WTC11 (cell line): ENCODE measurements at regions of chr12 and their contacts with region 1.

Region 1: GRCh38 chr12:52213512-52214420 is 19.3 kb upstream of the KRT7 start:
- DNase-seq: peak; percentile 96
- ATAC-seq: peak; percentile 86
- H3K4me3 Mint-ChIP-seq: no peak overlapping the region
- H3K27ac Mint-ChIP-seq: no peak overlapping the region
- H3K4me1 Mint-ChIP-seq: peaks cover 12% of the 10 kb centered on the region
- H3K27me3 Mint-ChIP-seq: no peaks in the 10 kb centered on the region
- CTCF ChIP-seq: peak; percentile 81

Region 2: GRCh38 chr12:51403681-51404136 is 810.1 kb before region 1 on chr12:
- CTCF ChIA-PET with region 1: no interaction called
- POLR2A ChIA-PET with region 1: no interaction called
- DNase-seq: no peak
- ATAC-seq: no peak
- H3K4me3 Mint-ChIP-seq: no peak overlapping the region
- H3K27ac Mint-ChIP-seq: peak overlapping the region; percentile 43; the same call in 1 of the 2 replicates
- H3K4me1 Mint-ChIP-seq: peaks cover 9% of the 10 kb centered on the region
- H3K27me3 Mint-ChIP-seq: no peaks in the 10 kb centered on the region
- CTCF ChIP-seq: no peak

Region 3: DNA sequence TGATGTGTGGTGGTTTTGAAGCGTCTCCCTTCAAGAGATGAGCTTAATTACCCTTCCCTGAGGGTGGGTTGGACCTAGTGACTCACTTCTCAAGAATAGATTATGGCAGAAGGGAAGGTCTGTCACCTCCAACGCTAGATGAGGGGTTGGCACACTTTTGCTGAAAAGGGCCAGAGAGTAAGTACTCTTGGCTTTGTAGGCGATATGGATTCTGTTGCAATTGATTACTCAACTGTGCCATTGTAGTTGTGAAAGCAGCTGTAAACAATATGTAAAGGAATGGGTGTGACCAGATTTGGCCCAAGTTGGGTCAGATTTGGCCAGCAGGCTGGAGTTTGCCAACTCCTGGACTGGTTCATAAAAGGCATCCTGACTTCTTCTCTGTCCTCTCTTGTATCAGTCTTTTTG is 81.0 kb before region 1 on chr12:
- CTCF ChIA-PET with region 1: no interaction called
- POLR2A ChIA-PET with region 1: no interaction called
- DNase-seq: no peak
- ATAC-seq: no peak
- H3K4me3 Mint-ChIP-seq: no peak overlapping the region
- H3K27ac Mint-ChIP-seq: no peak overlapping the region
- H3K4me1 Mint-ChIP-seq: peaks cover 20% of the 10 kb centered on the region
- H3K27me3 Mint-ChIP-seq: no peaks in the 10 kb centered on the region; the same call in none of the 2 replicates
- CTCF ChIP-seq: no peak

Region 4: GRCh38 chr12:52171950-52172512 is 41.7 kb before region 1 on chr12:
- CTCF ChIA-PET with region 1: interaction called, 53 read pairs
- POLR2A ChIA-PET with region 1: no interaction called
- DNase-seq: peak; percentile 79
- ATAC-seq: peak; percentile 71
- H3K4me3 Mint-ChIP-seq: no peak overlapping the region
- H3K27ac Mint-ChIP-seq: no peak overlapping the region
- H3K4me1 Mint-ChIP-seq: peaks cover 9% of the 10 kb centered on the region
- H3K27me3 Mint-ChIP-seq: no peaks in the 10 kb centered on the region
- CTCF ChIP-seq: 0 out of 2 replicates have a peak, but pooled peaks have one; percentile 25

Region 5: DNA sequence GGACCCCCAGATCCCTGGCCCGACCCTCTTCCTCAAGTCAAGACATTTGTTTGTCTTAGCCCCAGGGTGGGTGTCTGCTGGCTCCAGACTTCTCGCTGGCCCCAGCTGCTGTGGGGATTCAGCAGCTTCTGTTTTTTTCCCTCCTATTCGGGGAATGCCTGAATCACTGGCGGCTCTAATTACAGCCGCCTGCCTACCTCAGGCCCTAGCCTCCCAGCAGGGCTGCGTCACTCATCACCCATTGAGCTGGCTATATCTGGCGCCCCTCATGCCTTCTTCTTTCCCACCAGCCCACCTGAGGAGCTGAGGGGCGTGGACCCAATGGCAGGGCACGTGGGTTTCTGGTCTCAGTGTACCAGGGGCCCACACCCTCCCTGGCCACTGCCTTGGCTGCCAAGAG is 32.0 kb before region 1 on chr12:
- CTCF ChIA-PET with region 1: interaction called, 53 read pairs
- POLR2A ChIA-PET with region 1: no interaction called
- DNase-seq: peak; percentile 36
- ATAC-seq: peak; percentile 68
- H3K4me3 Mint-ChIP-seq: no peak overlapping the region
- H3K27ac Mint-ChIP-seq: peak overlapping the region; percentile 69; the same call in 1 of the 2 replicates
- H3K4me1 Mint-ChIP-seq: peaks cover 32% of the 10 kb centered on the region
- H3K27me3 Mint-ChIP-seq: no peaks in the 10 kb centered on the region; the same call in 1 of the 2 replicates
- CTCF ChIP-seq: no peak

Region 6: GRCh38 chr12:52235822-52236692 is 22.3 kb after region 1 on chr12:
- CTCF ChIA-PET with region 1: interaction called, 22 read pairs
- POLR2A ChIA-PET with region 1: no interaction called
- DNase-seq: no peak
- ATAC-seq: no peak
- H3K4me3 Mint-ChIP-seq: no peak overlapping the region
- H3K27ac Mint-ChIP-seq: no peak overlapping the region
- H3K4me1 Mint-ChIP-seq: peaks cover 58% of the 10 kb centered on the region
- H3K27me3 Mint-ChIP-seq: peaks cover 44% of the 10 kb centered on the region
- CTCF ChIP-seq: no peak